A673 (cell line): ENCODE measurements at regions of chr5 and their contacts with region 1.

Region 1: GRCh38 chr5:172707285-172708182 is 63.5 kb downstream of the DUSP1 start:
- DNase-seq: peak; percentile 78
- H3K4me3 ChIP-seq: no peak overlapping the region
- H3K27ac ChIP-seq: no peak overlapping the region
- H3K4me1 ChIP-seq: peaks cover 8% of the 10 kb centered on the region
- H3K27me3 ChIP-seq: no peaks in the 10 kb centered on the region
- CTCF ChIP-seq: peak; percentile 70

Region 2: DNA sequence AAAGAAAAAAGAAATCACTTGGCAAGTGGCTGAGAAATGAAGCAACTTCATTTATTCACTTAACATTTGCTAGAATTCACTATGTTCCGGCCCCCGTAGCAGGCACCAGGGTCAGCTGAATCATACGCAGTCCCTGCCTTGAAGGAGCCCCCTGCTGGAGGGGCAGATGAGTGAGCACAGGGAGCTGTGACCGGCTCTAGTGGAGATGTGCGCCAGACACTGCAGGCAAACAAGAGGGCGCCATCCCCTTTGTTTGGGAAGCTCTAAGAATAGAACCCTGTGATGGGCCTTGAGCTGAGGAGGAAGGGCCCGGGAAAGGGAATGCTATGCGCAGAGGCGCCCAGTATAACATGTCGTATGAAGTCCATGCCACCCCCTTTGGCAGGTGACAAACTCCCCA is 231.5 kb after region 1 on chr5:
- CTCF ChIA-PET with region 1: interaction called, 22 read pairs
- POLR2A ChIA-PET with region 1: no interaction called
- intact Hi-C with region 1: no loop called
- DNase-seq: peak; percentile 37
- H3K4me3 ChIP-seq: no peak overlapping the region
- H3K27ac ChIP-seq: no peak overlapping the region
- H3K4me1 ChIP-seq: peaks cover 18% of the 10 kb centered on the region
- H3K27me3 ChIP-seq: no peaks in the 10 kb centered on the region
- CTCF ChIP-seq: peak; percentile 38; the same call in 1 of the 2 replicates

Region 3: DNA sequence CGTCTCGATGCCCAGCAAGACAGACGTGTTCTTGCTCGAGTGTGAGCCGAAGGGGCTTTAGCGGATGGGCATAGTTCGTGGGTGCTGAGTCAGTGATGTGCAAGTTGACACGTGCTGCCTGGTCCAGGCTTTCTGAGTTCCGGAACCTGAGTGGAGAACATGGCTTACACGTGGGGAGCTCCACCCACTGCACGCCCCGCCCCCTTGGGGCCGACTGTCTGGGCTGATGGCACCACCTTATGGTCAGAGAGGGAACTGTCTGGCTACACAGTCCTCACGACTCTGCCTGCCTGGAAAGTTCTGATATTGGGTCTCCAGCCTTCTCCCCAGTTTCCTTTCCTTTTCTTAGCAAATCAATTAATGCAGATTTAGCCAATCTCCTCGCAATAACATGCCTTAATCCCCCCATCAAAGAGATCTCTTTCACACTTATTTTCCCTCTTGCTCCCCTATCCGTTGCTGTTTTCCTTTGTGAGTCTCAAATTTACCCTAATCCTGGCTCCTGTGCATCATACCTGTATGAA is 624.5 kb after region 1 on chr5:
- CTCF ChIA-PET with region 1: interaction called, 3 read pairs
- POLR2A ChIA-PET with region 1: no interaction called
- intact Hi-C with region 1: loop called (anchors 5 kb)
- DNase-seq: peak; percentile 85
- H3K4me3 ChIP-seq: no peak overlapping the region
- H3K27ac ChIP-seq: no peak overlapping the region
- H3K4me1 ChIP-seq: peaks cover 14% of the 10 kb centered on the region
- H3K27me3 ChIP-seq: no peaks in the 10 kb centered on the region
- CTCF ChIP-seq: peak; percentile 88